Activated CD4-positive, alpha-beta memory T cell treated with anti-CD3 and anti-CD28 coated beads, Interleukin-2, amount 10 ng/mL, durations not matched to agents 7 days and 5 days (primary cell): ENCODE measurements at regions of chr1 and their contacts with region 1.

Region 1: DNA sequence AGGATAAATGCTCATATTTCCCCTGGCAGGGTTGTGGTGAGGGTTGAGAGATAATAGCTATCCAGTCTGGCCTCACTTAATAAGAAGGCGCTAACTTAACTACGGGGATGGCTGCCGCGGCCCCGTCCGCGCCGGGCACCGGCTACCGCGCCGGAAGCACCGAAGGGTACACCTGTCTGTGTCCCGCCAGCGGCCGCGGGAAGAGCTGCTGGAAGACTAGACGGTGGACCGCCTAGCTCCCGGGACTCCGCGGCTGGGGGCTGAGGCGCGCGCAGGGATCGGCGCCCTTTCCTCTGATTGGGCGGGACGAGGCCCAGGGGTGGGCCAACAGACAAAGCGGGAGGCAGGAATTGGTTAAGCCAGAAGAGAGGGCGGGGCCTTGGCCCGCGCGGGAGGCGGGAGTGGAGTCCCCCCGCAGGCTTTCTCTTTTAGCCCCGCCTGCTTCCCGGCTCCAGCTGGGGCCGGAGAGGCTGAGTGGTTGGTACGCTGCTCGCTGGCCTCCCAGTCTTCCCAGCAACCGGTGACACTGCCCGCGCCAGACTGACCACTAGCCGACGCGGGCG is at the start of gene ZNF672:
- DNase-seq: peak; percentile 96
- H3K4me3 Mint-ChIP-seq: no peak within 1 kb of the TSS
- H3K27ac Mint-ChIP-seq: no peak within 1 kb of the TSS
- H3K4me1 Mint-ChIP-seq: peaks cover 29% of the 10 kb centered on the region
- H3K27me3 Mint-ChIP-seq: peaks cover 4% of the 10 kb centered on the region
- total RNA-seq, gene ZNF672: 54.1 to 60.1 TPM

Region 2: DNA sequence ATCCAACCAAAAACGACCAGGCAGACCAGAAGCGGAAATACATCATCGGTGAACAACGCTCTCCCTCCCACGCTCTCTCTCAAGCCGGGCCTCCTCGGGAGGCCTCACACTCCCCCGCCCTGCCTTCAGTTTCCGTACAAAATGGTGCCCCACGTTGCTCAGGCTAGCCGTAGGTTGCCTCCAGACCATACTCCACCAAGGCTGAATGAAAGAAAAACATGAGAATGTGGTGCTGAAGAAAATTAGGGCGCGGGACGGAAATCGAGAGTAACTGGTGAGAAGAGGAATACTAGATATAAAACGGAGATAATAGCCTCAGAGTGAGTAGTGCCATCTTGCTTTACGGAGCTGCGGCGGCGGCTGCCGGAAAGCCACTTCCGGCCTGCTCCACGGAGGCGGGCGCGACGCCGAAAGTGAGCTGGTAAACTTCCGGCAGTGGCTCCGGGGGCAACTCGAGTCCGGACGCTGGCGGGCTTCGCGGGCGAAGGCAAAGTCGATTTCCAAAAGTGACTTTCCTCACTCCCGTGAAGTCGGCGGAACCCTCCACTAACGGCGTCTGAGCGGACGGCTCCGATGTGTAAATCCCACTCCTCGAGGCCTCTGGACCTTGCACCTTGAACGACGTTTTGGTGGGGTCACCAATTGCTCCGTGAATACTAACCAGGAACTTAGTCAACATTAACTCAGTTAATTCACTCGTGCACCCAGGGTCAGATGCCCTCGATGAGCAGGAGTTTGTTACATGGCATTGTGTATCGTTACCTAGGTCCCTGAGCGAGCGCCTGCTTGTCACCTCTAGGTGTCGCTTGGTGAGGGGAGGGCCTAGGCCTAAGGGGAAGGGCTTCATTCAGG is 11.7 kb before region 1 on chr1 and contains the start of gene SH3BP5L:
- CTCF ChIA-PET with region 1: interaction called, 69 read pairs
- POLR2A ChIA-PET with region 1: interaction called, 136 read pairs
- DNase-seq: peak; percentile 91
- H3K4me3 Mint-ChIP-seq: peak within 1 kb of the TSS; percentile 84
- H3K27ac Mint-ChIP-seq: peak within 1 kb of the TSS; percentile 98
- H3K4me1 Mint-ChIP-seq: peaks cover 56% of the 10 kb centered on the region
- H3K27me3 Mint-ChIP-seq: peaks cover 2% of the 10 kb centered on the region
- total RNA-seq, gene SH3BP5L: 31.4 to 32.0 TPM

Region 3: DNA sequence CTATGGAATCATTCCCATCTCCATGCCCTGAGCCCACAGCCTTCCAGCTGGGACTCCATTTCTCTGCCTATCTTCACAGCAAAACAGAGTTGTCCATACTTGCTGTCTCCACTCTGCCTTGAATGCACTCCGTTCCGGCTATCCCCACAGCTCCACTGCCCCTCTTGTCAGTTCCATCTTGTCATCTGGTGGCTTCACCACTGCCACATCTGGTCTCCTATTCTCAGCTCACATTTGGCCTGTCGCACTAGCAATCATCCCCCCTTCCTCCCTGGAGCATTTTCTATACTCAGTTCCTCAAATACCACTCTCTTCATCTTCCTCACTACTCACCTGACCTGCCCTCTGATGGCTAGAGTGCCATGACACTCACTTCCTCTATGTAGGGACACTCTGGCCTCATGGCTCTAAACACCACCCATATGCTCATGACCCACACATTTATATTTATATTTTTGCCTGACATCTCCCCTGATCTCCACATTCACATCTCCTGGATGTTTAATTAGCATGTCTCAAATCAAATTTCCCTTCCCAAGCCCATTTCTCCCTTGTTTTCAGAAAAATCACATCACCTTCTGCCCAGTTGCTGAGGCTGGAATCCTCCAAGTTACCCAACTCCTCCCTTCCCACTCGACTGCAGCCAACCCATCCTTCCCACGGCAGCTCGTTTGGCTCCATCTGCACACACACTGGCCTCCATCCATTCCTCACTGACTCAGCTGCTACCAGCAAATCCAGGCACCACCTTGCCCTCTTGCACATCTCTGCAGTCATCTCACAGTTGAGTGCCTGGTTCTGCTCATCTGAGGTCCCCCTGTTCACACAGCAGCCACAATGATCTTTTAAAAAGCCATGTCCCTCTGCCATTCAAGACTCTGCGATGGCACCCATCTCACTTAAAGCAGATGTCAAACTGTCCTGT is 14.9 kb after region 1 on chr1:
- CTCF ChIA-PET with region 1: interaction called, 43 read pairs
- POLR2A ChIA-PET with region 1: interaction called, 90 read pairs
- DNase-seq: no peak
- H3K4me3 Mint-ChIP-seq: no peak overlapping the region
- H3K27ac Mint-ChIP-seq: no peak overlapping the region
- H3K4me1 Mint-ChIP-seq: peaks cover 18% of the 10 kb centered on the region
- H3K27me3 Mint-ChIP-seq: no peaks in the 10 kb centered on the region

Region 4: DNA sequence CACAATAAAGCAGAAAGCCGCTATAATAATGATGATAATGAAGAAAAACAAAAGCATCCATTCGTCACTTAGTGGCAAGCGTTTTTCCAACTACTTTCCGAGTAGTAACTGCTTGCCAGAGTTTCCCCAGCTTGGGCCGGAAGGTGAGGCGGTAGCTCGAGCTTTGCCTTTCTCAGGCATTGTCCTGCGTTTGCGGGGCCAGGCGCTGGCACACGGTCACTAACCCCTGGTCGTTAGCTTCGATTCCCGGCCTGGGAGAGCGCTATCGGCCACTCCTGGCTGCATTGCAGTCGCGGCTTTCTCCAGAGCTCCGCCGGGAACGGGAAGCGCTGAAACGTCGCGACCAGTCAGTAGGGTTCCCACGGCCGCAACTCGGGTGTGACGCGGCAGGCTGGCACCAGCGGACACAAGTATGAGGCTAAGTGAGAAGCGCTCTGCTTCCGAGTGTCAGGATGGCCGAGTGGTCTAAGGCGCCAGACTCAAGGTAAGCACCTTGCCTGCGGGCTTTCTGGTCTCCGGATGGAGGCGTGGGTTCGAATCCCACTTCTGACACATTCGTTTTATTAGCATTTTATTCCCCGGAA is 35.6 kb after region 1 on chr1:
- CTCF ChIA-PET with region 1: interaction called, 4 read pairs
- POLR2A ChIA-PET with region 1: interaction called, 10 read pairs
- DNase-seq: peak; percentile 93
- H3K4me3 Mint-ChIP-seq: peak overlapping the region; percentile 81
- H3K27ac Mint-ChIP-seq: peak overlapping the region; percentile 84
- H3K4me1 Mint-ChIP-seq: peaks cover 22% of the 10 kb centered on the region
- H3K27me3 Mint-ChIP-seq: peaks cover 2% of the 10 kb centered on the region